BJ (cell line): ENCODE measurements at regions of chr5 and their contacts with region 1.

Region 1: GRCh38 chr5:149406203-149406978 is 27.3 kb upstream of the IL17B start:
- DNase-seq: peak; percentile 93
- H3K4me3 ChIP-seq: peak overlapping the region; percentile 87
- H3K27me3 ChIP-seq: no peaks in the 10 kb centered on the region
- CTCF ChIP-seq: peak; percentile 35

Region 2: DNA sequence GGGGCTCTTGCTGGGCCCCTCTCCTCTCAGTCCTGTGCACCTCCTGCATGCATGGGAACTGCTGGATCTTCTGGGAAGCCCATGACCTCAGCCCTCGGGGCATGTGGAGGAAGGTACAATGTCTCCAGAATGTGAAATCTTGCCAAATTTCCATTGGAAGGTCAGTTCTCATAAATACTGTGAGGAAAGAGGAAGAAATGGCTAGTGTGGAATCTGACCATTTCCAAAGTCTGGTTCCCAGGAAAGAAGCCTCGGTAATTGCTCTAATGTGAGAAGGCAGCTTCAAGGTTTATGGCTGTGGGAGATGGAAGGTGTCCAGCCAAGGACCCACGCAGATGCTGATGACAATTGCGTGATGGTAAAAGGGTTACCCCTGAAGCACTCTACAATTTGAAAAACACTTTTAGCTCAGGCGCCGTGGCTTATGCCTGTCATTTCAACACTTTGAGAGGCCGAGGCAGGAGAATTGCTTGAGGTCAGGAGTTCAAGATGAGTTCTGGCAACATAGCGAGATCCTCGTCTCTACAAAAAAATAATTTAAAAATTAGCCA is 19.2 kb before region 1 on chr5:
- CTCF ChIA-PET with region 1: interaction called, 30 read pairs
- POLR2A ChIA-PET with region 1: interaction called, 9 read pairs
- DNase-seq: peak; percentile 97
- H3K4me3 ChIP-seq: no peak overlapping the region
- H3K27me3 ChIP-seq: no peaks in the 10 kb centered on the region
- CTCF ChIP-seq: no peak

Region 3: DNA sequence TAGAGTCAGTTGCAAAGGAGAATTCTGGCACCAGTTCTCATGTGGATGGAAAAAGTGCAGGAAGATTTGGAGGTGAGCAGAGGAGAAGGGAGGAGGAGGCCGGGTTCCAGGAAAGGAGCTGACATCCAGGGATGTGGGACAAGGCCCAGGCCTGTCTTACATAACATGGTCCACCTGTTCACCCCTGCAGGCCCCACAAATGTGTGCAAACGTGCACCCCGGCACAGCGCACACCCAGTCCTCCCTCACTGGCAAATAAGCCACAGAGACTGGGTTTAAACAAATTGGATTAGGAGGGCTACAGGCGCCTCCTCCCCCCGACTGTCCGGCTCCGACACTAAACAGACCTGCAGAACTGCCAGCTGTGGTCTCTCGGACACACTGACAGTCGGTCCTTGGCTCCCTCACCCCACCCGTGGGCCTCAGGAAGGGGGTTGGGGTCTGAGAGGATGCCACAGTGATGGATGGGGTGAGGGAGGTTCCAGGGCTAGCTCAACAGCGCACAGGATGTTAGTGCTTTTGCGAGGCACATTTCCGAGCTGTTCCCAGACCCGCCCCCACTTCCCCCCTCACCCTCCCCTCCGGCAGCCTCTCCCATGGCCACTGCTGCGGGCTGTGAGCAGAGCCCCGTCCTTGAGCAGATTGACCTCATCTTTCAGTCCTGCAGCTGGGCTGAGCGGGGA is 16.1 kb after region 1 on chr5:
- CTCF ChIA-PET with region 1: interaction called, 6 read pairs
- POLR2A ChIA-PET with region 1: interaction called, 27 read pairs
- DNase-seq: peak; percentile 59
- H3K4me3 ChIP-seq: no peak overlapping the region
- H3K27me3 ChIP-seq: no peaks in the 10 kb centered on the region
- CTCF ChIP-seq: no peak